CD8-positive, alpha-beta T cell (primary cell): ENCODE measurements at regions of chr5 and their contacts with region 1.

Region 1: GRCh38 chr5:59673438-59674058 is 220.0 kb downstream of the PDE4D start:
- DNase-seq: peak in 2 of 9 experiments; percentile 28 to 52
- ATAC-seq: no peak
- H3K4me3 ChIP-seq: no peak overlapping the region
- H3K4me3 Mint-ChIP-seq: no peak overlapping the region
- H3K27ac ChIP-seq: no peak overlapping the region
- H3K27ac Mint-ChIP-seq: no peak overlapping the region
- H3K4me1 ChIP-seq: no peaks in the 10 kb centered on the region
- H3K4me1 Mint-ChIP-seq: no peaks in the 10 kb centered on the region
- H3K27me3 ChIP-seq: no peaks in the 10 kb centered on the region
- H3K27me3 Mint-ChIP-seq: peaks cover 2% of the 10 kb centered on the region
- CTCF ChIP-seq: peak; percentile 88

Region 2: DNA sequence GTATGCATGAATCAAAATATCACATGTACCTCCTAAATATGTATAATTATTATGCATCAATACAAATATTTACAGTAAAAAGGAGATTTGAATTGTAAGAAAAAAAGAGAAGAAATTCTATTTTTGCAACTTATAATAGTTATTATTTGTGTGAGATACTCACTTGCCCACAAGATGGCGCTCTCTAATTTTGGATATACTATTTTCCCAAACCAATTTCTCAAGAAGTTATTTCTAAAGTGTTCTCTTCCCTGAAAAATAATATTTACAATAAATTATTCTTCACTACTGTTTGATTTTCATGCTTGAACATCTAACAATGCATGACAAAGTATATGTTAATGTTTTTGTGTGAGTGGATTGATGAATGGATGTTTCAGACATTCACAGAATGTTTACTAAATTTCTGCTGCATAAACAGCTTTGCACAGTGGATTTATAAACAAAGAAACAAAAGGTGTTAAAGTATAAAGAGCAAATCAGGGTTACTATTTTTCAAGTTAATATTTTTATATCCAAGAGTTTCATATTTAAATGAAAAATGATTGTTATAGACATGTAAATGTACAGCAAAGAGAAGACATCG is 283.4 kb before region 1 on chr5:
- CTCF ChIA-PET with region 1: interaction called, 6 read pairs
- POLR2A ChIA-PET with region 1: no interaction called
- intact Hi-C with region 1: loop called (anchors 5 kb)
- DNase-seq: peak in 3 of 9 experiments; percentile 11 to 48 (median 23)
- ATAC-seq: no peak
- H3K4me3 ChIP-seq: no peak overlapping the region
- H3K4me3 Mint-ChIP-seq: no peak overlapping the region
- H3K27ac ChIP-seq: no peak overlapping the region
- H3K27ac Mint-ChIP-seq: no peak overlapping the region
- H3K4me1 ChIP-seq: no peaks in the 10 kb centered on the region
- H3K4me1 Mint-ChIP-seq: no peaks in the 10 kb centered on the region
- H3K27me3 ChIP-seq: no peaks in the 10 kb centered on the region
- H3K27me3 Mint-ChIP-seq: peaks cover 5% of the 10 kb centered on the region
- CTCF ChIP-seq: peak; percentile 81

Region 3: GRCh38 chr5:59506285-59506877 is 167.2 kb before region 1 on chr5:
- CTCF ChIA-PET with region 1: no interaction called
- POLR2A ChIA-PET with region 1: no interaction called
- intact Hi-C with region 1: loop called in 1 of 2 experiments (anchors 5 kb)
- DNase-seq: peak in 1 of 9 experiments; percentile 10
- ATAC-seq: no peak
- H3K4me3 ChIP-seq: no peak overlapping the region
- H3K4me3 Mint-ChIP-seq: no peak overlapping the region
- H3K27ac ChIP-seq: no peak overlapping the region
- H3K27ac Mint-ChIP-seq: no peak overlapping the region
- H3K4me1 ChIP-seq: no peaks in the 10 kb centered on the region
- H3K4me1 Mint-ChIP-seq: no peaks in the 10 kb centered on the region
- H3K27me3 ChIP-seq: no peaks in the 10 kb centered on the region
- H3K27me3 Mint-ChIP-seq: no peaks in the 10 kb centered on the region
- CTCF ChIP-seq: no peak

Region 4: DNA sequence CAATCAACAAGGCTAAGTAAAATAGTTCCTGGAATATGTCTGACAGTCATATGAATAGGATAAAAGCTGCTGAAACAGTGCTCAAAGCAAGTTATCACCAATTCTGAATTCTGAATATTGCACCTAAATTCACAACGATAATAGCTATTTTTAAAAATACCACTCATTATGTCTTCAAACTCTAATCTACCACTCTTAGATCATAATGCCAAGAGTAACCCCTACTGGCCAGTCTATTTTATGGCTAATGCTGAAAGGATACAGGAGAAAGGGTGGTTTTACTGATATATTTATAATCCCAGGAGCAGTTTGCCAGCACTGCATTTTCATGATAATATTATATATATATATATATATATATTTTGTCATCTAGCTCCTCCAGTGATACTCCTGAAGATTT is 12.8 kb before region 1 on chr5:
- CTCF ChIA-PET with region 1: interaction called, 16 read pairs
- POLR2A ChIA-PET with region 1: no interaction called
- intact Hi-C with region 1: no loop called
- DNase-seq: no peak
- ATAC-seq: no peak
- H3K4me3 ChIP-seq: no peak overlapping the region
- H3K4me3 Mint-ChIP-seq: no peak overlapping the region
- H3K27ac ChIP-seq: no peak overlapping the region
- H3K27ac Mint-ChIP-seq: no peak overlapping the region
- H3K4me1 ChIP-seq: no peaks in the 10 kb centered on the region
- H3K4me1 Mint-ChIP-seq: peaks cover 4% of the 10 kb centered on the region
- H3K27me3 ChIP-seq: no peaks in the 10 kb centered on the region
- H3K27me3 Mint-ChIP-seq: no peaks in the 10 kb centered on the region
- CTCF ChIP-seq: no peak